K562 (cell line): ENCODE measurements at regions of chr6 and their contacts with region 1.

Region 1: DNA sequence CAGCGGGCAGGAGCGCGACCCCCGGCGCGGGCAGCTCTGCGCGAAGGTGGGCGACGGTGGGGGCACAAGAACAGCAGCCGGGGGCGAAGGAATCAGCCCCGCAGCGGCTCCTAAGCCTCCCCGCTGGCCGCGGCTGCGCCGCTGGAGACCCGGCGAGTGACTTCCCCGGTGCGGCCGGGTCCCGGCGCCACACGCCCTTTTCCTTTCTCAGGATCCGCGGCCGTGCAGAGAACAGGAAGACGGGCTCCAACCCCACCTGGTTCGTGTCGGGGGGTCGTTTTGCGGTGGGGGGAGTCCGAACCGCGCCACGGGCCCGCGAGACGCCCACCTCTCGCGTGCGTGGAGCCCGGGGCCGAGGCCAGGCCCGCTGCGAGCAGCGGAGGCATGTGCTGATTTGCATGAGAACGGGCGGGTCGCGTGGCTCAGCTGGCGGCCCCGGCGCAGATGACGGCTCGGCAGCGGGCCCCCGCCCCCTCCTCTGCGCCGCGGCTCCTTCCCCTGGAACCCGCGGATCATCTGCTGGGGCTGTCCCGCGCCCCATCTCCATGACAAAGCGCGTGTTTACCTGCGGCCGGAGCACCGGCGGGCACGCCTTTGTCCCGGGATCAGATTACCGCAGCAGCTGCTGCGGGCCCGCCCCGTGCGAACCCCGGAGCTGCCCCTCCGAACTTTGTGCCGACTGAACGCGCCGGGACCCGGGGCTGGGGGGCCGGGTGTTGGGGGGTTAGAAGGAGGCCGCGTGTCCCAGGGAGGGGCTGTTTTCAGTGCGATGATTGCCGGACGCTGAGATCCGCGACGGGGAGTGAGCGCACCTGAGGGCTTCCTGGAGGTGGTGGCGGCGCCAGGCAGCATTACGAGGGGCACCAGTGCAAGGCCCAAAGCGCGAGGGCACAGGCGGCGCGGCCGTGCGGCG is 4.9 kb upstream of the DLL1 start:
- DNase-seq: peak; percentile 38 to 68 (median 56)
- ATAC-seq: peak; percentile 77
- H3K4me3 ChIP-seq: peak overlapping the region; percentile 36
- H3K27ac ChIP-seq: no peak overlapping the region
- H3K4me1 ChIP-seq: peaks cover 0 to 34% of the 10 kb centered on the region in 2 experiments; a peak in 3 of 5 replicates
- H3K27me3 ChIP-seq: peaks cover 69 to 72% of the 10 kb centered on the region in 2 experiments
- CTCF ChIP-seq: no peak
- EP300 ChIP-seq: no peak
- POLR2A ChIP-seq: no peak
- RAD21 ChIP-seq: no peak

Region 2: GRCh38 chr6:170429450-170429849 is 133.7 kb after region 1 on chr6:
- CTCF ChIA-PET with region 1: no interaction called
- POLR2A ChIA-PET with region 1: interaction called, 3 read pairs
- in situ Hi-C with region 1: no loop called
- intact Hi-C with region 1: loop called (anchors 5 kb)
- DNase-seq: peak; percentile 38 to 44 (median 42)
- ATAC-seq: peak; percentile 85
- H3K4me3 ChIP-seq: no peak overlapping the region
- H3K27ac ChIP-seq: no peak overlapping the region
- H3K4me1 ChIP-seq: no peaks in the 10 kb centered on the region
- H3K27me3 ChIP-seq: peaks cover 42 to 61% of the 10 kb centered on the region in 2 experiments
- CTCF ChIP-seq: peak; percentile 25 to 35 (median 26); a peak in 3 of 6 replicates
- EP300 ChIP-seq: no peak
- POLR2A ChIP-seq: no peak
- RAD21 ChIP-seq: peak in 1 of 2 experiments; percentile 36; a peak in 2 of 4 replicates